Posterior vena cava (tissue), 2 donors: ENCODE measurements at regions of chr18 and their contacts with region 1.

Region 1: DNA sequence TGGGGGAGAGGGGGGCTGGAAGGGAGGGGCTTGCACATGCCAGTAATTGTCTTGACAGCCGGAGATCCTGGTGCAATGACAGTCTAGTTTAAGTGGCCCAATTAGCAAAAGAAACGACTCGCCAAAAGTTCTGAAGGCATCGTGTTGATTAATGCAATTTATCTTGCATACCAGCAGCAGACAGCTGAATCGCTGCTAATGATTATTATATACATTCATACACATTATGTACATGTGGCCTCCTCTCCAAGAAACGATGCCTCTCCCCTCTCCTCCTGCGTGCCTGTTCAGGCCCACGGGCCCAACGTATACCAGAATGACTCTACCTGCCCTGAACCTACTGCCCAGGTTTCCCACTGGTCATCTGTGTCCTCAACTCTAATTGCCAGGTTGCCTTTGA is 214.5 kb downstream of the CELF4 start:
- DNase-seq: no peak

Region 2: DNA sequence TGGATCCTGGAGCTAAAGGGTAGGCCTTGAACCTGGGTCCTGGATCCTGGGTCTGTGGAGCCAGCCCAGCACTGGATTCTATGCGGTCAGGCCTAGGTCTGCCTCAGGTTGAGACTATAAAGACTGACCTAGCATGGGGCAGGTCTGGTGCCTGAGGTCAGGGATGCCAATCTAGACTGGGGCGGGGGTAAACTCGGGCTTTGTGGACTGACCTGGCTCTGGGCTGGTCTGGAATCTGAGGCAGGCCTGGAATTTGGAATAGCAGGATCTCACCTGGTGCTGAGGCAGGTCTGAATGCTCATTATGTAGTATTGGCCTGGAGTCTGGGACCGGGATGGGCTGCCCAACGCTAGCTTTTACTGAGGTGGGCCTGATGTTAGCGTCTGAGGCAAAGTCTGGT is 266.2 kb before region 1 on chr18:
- intact Hi-C with region 1: no loop called
- DNase-seq: no peak

Region 3: GRCh38 chr18:37282386-37283037 is 68.6 kb before region 1 on chr18:
- intact Hi-C with region 1: no loop called
- DNase-seq: no peak

Region 4: DNA sequence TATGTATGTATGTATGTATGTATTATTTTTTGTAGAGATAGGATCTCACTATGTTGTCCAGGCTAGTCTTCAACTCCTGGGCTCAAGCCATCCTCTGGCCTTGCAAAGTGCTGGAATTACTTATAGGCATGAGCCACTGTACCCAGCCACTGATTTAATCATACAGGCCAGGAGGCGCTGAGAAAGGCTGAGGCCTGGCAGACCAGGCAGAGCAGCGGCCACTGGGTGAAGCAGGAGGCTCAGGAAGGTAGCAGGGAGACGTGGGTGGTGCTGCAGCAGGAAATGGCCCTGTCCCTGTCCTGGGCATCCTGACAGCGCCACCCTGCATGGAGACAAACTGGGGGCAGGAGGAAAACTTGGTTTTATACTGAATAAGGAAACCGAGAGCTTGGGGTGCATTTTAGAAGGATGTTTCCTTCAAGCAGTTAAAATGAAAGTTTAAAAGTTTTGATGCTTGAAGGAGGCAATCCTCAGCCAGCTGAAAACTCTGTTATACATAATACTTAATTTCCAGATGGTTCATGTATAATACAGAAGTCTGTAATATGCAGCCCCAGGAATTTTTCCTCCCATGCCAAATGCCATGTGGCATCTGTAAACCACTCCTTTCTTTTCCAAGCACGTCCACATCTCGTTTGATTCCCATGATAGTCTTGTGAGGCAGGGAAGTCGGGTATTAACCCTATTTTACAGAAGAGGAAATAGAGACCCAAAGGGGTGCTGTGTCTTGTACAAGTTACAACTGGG is 32.1 kb after region 1 on chr18:
- intact Hi-C with region 1: no loop called
- DNase-seq: no peak

Region 5: DNA sequence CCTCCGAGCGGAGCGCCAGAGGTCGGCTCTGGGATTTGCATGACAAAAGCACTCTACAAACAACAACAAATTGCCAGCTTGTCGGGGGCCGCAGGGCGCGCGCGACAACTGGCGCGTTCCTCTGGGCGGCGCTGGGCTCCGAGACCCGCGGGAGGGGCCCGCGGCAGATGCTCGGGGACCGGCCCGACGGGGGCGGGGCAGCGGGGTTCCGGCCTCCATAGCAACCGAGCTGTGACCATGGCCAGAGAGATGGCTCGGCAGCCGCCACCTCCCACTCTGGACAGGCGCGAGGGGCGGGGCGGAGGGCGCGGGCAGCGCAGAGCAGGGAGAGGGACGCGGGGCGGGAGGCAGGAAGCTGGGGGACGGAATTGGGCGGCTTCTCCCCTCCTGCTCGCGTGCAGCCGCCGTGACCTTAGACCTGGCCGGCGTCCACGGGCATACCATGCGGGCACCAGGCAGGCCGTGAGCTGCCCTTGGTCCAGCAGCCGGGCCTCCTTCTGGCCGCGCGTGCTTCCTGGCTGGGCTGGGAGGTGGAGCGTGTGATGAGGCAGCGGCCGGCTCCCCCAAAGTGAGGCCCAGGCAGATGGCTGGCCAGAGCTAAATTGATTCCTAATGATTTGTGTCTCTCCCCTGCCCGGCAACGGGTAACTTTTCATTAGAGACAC is 43.0 kb after region 1 on chr18:
- intact Hi-C with region 1: loop called in 1 of 2 experiments (anchors 1 kb)
- DNase-seq: peak; percentile 86

Region 6: DNA sequence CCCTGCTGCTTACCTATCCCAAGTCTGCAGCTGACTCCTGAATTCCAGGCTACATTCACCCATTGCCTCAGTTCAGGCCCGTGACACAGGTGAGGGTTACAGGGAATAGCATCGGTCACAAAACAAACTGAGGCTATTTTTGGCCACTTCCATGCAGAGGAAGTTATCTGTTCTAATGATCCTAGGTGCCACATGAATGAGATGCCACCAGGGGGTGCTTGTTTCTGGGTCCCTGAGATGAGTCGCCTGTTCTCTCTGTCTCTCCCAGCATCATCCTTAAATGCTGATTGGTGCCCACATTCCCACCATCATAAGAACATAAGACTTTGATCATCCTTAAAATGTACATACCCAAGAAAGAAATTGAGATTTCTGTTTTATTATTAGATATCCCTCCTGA is 333.5 kb after region 1 on chr18:
- intact Hi-C with region 1: loop called in 1 of 2 experiments (anchors 2 kb)
- DNase-seq: no peak